Transverse colon (tissue), 4 donors: ENCODE measurements at regions of chr4 and their contacts with region 1.

Region 1: GRCh38 chr4:186297013-186297645 is 31.1 kb downstream of the F11 start:
- DNase-seq: no peak
- H3K4me3 ChIP-seq: no peak overlapping the region
- H3K27ac ChIP-seq: no peak overlapping the region
- H3K4me1 ChIP-seq: peaks cover 3 to 17% (median 9%) of the 10 kb centered on the region in 4 donors
- H3K27me3 ChIP-seq: peaks cover 6% of the 10 kb centered on the region
- CTCF ChIP-seq: peak; percentile 66 to 79 (median 69)
- EP300 ChIP-seq: no peak
- POLR2A ChIP-seq: no peak

Region 2: GRCh38 chr4:186458050-186458449 is 160.9 kb after region 1 on chr4:
- in situ Hi-C with region 1: no loop called
- intact Hi-C with region 1: no loop called
- DNase-seq: no peak
- H3K4me3 ChIP-seq: no peak overlapping the region
- H3K27ac ChIP-seq: no peak overlapping the region
- H3K4me1 ChIP-seq: no peaks in the 10 kb centered on the region
- H3K27me3 ChIP-seq: no peaks in the 10 kb centered on the region
- CTCF ChIP-seq: no peak
- EP300 ChIP-seq: no peak
- POLR2A ChIP-seq: no peak

Region 3: GRCh38 chr4:186554539-186554913 is 257.4 kb after region 1 on chr4:
- in situ Hi-C with region 1: loop called in 1 of 4 experiments (anchors 25 kb)
- intact Hi-C with region 1: no loop called
- DNase-seq: peak; percentile 82
- H3K4me3 ChIP-seq: peak overlapping the region in 3 of 4 donors; percentile 21 to 60 (median 49)
- H3K27ac ChIP-seq: peak overlapping the region; percentile 67 to 78 (median 76)
- H3K4me1 ChIP-seq: peaks cover 0 to 9% (median 4%) of the 10 kb centered on the region in 4 donors
- H3K27me3 ChIP-seq: peaks cover 39% of the 10 kb centered on the region
- CTCF ChIP-seq: peak; percentile 11 to 62 (median 31)
- EP300 ChIP-seq: no peak
- POLR2A ChIP-seq: no peak

Region 4: GRCh38 chr4:186587416-186588018 is 290.4 kb after region 1 on chr4:
- in situ Hi-C with region 1: loop called in 3 of 4 experiments (anchors 5 to 25 kb)
- intact Hi-C with region 1: loop called (anchors 2 kb)
- DNase-seq: peak; percentile 75
- H3K4me3 ChIP-seq: no peak overlapping the region
- H3K27ac ChIP-seq: no peak overlapping the region
- H3K4me1 ChIP-seq: no peaks in the 10 kb centered on the region
- H3K27me3 ChIP-seq: no peaks in the 10 kb centered on the region
- CTCF ChIP-seq: peak; percentile 81 to 91 (median 89)
- EP300 ChIP-seq: no peak
- POLR2A ChIP-seq: no peak